Left cardiac atrium (tissue), 4 donors: ENCODE measurements at regions of chr11 and their contacts with region 1.

Region 1: GRCh38 chr11:62061351-62062222 is 62.2 kb upstream of the INCENP start:
- DNase-seq: no peak
- ATAC-seq: peak; percentile 44 to 64

Region 2: GRCh38 chr11:62004473-62004872 is 57.1 kb before region 1 on chr11:
- intact Hi-C with region 1: loop called in 1 of 2 experiments (anchors 10 kb)
- DNase-seq: peak; percentile 68
- ATAC-seq: peak; percentile 70 to 88

Region 3: GRCh38 chr11:62542750-62543567 is 481.4 kb after region 1 on chr11:
- intact Hi-C with region 1: no loop called
- DNase-seq: peak; percentile 88
- ATAC-seq: peak; percentile 32